GM10248 (cell line): ENCODE measurements at regions of chr2 and their contacts with region 1.

Region 1: DNA sequence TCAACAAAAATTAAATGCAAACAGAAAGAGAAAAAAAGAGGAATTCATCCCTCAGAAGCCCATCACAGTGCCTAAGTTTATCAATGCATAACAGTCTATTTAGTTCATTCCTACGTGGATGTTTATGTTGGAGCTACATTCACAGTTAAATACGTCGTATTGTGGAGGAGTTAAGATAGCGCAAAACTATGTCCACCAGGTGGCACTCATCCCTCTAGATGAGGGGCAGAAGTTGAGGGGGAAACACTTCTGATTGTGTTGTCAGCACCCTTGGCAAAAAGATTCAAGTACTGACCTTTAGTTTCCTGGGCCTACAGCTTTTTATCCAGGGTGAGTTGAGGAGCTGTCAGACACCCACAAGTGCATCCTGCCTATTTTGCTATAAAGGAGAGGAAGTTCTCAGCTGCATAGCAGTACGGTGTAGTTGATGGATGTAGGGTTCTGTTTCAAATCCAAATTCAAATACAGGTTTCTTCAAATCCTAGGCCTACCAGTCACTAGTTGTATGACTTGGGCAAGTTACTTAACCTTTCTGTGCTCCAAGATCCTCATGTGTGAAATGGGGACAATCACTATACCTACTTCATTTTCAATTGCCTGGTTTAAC is 26.8 kb upstream of the MYO1B start:
- DNase-seq: no peak
- CTCF ChIP-seq: no peak

Region 2: DNA sequence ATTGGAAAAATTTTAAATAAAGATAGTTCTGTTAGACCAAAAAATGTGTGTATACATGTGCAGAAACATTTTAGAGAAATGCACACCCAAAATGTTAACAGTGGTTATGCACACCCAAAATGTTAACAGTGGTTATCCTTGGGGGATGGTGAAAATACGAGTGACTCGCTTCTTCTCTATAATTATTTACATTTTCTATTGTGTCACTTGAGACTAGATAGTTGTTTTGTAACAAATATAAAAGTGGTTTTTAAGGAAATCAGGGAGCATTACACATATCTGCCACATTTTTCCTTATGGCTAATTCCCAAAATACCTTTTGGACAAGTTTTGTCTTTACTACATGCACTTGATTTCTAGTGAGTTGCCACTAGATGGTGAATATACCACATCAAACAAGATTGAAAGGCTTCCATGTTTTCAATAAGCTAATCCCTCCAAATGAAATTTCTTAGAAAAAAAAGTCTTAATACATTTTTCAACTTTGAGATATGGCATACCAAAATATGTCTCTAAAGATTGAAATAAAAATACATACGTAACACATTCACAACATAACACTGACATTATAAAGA is 889.7 kb before region 1 on chr2:
- CTCF ChIA-PET with region 1: no interaction called
- POLR2A ChIA-PET with region 1: no interaction called
- DNase-seq: no peak
- CTCF ChIP-seq: no peak

Region 3: DNA sequence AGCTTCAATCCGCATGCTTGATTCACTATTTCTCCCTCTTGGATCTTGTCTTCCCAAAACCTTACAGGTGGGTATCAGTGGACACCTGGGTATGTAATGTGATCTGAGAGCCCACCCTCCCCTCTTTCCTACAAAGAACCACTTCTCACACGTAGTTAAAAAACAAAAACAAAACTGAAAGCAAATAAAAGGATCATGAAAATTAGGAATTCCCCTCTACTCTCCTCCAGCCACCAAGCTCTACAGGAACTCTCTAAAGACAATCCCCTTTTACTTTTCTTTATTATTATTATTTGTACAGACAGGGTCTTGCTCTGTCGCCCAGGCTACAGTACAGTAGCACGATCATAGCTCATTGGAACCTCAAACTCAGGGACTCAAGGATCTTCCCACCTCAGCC is 14.0 kb before region 1 on chr2:
- CTCF ChIA-PET with region 1: interaction called, 10 read pairs
- POLR2A ChIA-PET with region 1: no interaction called
- DNase-seq: peak; percentile 15
- CTCF ChIP-seq: no peak

Region 4: DNA sequence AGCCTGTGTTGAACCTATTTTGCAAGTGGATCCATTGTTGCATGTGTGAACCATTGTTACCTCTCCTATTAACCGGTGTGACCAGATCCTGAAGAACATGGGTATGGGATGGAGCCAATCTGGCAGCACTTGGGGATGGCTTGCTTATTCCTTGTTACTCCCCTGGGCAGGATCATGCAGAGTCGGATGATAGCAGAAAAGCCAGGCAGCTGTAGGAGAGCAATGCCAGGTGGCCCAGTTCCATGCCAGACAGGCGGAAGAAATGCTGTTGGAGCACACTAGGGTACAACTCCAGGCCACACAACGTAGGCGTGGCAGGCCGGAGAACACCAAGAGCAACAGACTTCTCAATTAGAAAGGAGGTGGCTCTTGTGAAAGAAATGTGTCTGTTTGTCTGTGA is 10.5 kb after region 1 on chr2:
- CTCF ChIA-PET with region 1: interaction called, 11 read pairs
- POLR2A ChIA-PET with region 1: no interaction called
- DNase-seq: no peak
- CTCF ChIP-seq: no peak

Region 5: GRCh38 chr2:191234376-191234775 is 16.0 kb after region 1 on chr2:
- CTCF ChIA-PET with region 1: interaction called, 16 read pairs
- POLR2A ChIA-PET with region 1: no interaction called
- DNase-seq: no peak
- CTCF ChIP-seq: no peak

Region 6: DNA sequence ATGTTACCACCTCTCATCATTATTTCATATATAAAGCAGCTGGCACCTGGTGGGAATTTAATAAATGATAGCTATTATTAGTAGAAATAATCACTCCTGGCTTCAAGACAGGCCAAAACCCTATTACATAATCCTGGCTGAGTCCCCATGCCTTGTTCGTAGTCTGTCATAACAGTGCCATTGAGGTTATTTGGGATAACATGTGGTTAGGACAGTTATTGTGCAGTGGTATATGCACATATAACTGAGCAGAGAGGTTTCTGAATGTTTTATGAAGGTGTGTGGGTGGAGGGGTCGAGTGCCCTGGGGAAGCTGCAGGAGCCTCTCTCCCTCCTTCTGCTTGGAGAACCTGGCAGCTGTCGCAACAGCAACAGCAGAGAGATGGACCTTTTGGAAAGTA is 297.2 kb after region 1 on chr2:
- CTCF ChIA-PET with region 1: no interaction called
- POLR2A ChIA-PET with region 1: no interaction called
- DNase-seq: no peak
- CTCF ChIP-seq: no peak